Mammary epithelial cell (primary cell): ENCODE measurements at regions of chr6 and their contacts with region 1.

Region 1: GRCh38 chr6:85764844-85765243 is 122.2 kb upstream of the SYNCRIP start:
- DNase-seq: no peak
- H3K4me3 ChIP-seq: no peak overlapping the region
- H3K27ac ChIP-seq: no peak overlapping the region
- H3K4me1 ChIP-seq: no peaks in the 10 kb centered on the region
- H3K27me3 ChIP-seq: no peaks in the 10 kb centered on the region
- CTCF ChIP-seq: no peak

Region 2: DNA sequence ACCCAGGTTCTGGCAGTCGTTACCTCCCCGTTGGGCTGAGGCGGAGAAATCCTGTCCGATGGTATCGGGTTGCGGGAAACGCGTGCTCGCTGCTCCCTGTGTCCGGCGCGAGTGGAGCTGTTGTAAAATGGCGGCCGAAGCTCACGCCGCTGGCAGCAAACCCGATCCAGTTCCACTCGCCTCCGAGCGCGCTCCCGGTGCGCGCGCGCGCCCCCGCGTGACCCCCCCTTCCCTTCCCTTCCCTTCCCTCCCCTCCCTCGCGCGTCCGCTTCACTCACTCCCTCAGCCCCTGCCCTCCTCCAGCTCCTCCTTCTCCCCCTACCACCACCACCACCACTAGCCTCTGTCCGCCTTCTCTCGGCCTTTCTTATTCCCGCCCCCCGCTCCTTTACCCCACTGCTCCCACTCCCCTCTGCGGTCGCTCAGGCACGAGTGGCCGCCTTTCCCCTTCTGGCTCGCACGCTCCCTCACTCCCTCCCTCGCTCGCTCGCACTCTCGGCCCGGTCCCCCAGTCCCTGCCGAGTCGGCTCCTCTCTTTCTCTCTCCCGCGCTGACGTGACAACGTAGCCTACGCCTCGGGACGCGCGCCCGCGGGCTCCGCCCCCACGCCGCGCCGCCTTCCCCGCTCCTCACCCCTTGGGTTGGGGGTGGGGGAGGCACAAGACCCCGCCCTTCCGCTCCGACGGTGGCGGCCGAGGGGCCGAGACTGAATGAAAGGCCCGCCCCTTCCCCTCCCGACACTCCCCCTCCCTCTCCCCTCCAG is 121.9 kb before region 1 on chr6 and contains the start of gene SYNCRIP:
- CTCF ChIA-PET with region 1: no interaction called
- dilution Hi-C with region 1: no loop called
- in situ Hi-C with region 1: no loop called
- intact Hi-C with region 1: no loop called
- DNase-seq: peak; percentile 99
- H3K4me3 ChIP-seq: peak within 1 kb of the TSS; percentile 92 to 99 (median 99)
- H3K27ac ChIP-seq: peak within 1 kb of the TSS; percentile 99
- H3K4me1 ChIP-seq: peaks cover 23% of the 10 kb centered on the region
- H3K27me3 ChIP-seq: no peaks in the 10 kb centered on the region
- CTCF ChIP-seq: no peak
- total RNA-seq, gene SYNCRIP: 47.8 to 132 TPM

Region 3: DNA sequence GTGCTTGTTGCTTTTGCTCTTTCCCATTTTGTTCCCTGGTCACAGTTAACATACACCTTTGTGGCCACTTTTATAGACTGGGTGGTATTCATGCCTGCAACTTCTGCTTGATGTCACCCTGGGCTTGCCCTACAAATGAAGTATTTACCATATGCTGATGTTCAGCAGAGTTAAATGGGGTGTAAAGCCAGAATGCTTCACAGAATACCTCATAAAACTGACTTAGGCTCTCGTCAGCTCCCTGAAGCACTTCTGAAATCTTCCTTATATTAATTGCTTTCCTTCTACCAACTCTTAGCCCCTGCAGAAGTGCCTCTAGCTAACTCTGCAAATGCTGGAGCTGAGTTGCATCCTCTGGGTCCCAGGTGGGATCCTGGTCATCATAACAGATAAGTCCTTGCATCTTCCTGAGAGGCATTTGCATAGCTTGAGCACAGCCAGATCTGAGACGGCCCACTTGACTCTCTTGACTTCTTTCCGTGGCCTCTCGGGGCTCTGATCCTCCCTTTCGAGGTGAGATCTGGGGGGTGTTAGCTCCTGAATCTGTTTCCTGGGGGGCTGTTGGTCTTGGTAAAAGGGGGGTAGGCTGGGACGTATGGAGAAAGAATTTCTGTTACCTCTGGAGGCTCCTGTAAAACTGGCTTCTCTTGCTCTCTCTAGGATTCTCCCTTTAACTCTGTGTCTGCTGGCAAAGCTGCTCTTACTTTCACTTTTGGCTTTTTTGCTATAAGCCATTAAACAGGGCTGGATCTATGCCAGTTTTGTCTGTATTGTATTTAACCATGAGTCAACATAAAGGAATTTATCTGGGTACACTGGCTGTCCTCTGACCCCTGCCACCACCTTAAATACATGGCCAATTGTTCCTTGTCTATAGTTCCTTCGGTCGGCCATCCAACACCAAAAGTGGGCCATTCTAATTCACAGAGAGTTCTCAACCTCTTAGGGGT is 100.9 kb after region 1 on chr6:
- CTCF ChIA-PET with region 1: no interaction called
- dilution Hi-C with region 1: no loop called
- in situ Hi-C with region 1: no loop called
- intact Hi-C with region 1: loop called (anchors 10 kb)
- DNase-seq: peak; percentile 48
- H3K4me3 ChIP-seq: peak overlapping the region; percentile 33 to 60 (median 47)
- H3K27ac ChIP-seq: peak overlapping the region; percentile 17
- H3K4me1 ChIP-seq: peaks cover 11% of the 10 kb centered on the region
- H3K27me3 ChIP-seq: no peaks in the 10 kb centered on the region
- CTCF ChIP-seq: no peak

Region 4: DNA sequence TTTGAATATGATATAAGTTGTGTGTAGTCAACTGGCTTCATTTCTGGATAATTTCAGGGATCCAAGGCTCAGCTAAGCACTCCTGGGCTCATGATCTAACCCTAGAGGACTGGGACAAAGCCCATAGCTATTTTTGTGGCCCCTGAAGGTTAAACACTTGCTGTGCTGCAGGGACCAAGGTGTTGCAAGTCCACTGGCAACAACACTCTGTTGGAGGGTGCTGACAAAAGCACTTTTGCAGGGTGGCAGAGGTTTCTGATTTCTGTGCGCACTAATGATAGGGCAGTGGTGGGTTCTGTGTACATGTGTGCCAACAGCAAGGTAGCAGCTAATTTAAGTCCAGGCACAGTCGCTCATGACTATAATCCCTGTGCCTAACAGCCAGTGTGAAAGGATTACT is 323.1 kb after region 1 on chr6:
- CTCF ChIA-PET with region 1: no interaction called
- dilution Hi-C with region 1: no loop called
- in situ Hi-C with region 1: no loop called
- intact Hi-C with region 1: no loop called
- DNase-seq: no peak
- H3K4me3 ChIP-seq: no peak overlapping the region
- H3K27ac ChIP-seq: no peak overlapping the region
- H3K4me1 ChIP-seq: no peaks in the 10 kb centered on the region
- H3K27me3 ChIP-seq: no peaks in the 10 kb centered on the region
- CTCF ChIP-seq: no peak